ENCODE measurements at regions of chr1 and their contacts with region 1.

Region 1: DNA sequence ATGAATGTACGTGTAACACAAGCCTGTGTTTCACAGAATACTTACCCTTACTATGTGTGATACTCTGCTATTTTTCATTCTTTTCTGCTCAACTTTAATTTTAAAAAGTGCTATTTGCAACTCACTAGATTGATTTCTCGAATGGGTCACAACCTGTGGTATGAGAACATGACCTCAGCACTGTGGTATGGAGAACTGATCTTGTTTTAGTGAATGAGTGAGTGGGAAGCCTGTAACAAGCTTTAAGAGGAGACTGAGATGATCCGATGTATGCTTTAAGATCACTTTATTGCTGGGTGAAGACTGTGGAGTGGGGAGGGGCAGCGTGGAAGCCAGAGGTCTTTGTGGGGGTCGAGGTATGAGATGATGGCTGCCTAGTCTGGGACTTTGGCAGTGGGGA is 21.6 kb downstream of the MECR start:
- DNase-seq: no peak
- H3K4me3 ChIP-seq: no peak overlapping the region
- H3K27ac ChIP-seq: no peak overlapping the region
- H3K4me1 ChIP-seq: peaks cover 15% of the 10 kb centered on the region
- H3K27me3 ChIP-seq: no peaks in the 10 kb centered on the region
- CTCF ChIP-seq: no peak

Region 2: DNA sequence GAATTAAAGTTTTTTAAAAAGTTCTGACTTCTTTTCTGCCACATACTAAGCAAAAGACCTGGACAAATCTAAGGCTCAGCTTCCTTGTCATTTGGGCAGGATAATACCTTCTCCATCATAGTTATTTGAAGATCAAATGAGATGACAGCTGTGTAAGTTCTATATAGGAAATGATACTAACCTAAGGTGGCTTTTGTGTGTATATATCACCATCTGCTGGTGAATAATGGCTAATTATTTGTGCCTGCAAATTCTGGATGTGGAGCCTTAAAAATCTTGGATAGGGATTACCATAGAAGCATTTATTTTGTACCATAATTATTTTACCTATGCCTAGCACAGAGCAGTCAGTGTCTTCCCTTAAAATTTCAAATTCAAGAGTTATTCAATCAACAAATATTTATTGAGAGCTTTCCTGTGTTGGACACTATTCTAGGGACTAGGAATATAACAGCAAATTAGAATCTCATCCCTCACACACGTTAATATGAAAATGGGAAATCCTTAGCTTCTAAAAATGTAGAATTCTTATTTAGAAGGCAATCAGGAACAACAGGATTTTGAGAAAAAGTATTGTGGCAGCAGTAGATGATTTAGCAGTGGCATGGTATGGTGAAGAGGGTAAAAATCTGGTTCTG is 175.2 kb before region 1 on chr1:
- intact Hi-C with region 1: loop called (anchors 5 kb)
- DNase-seq: no peak
- H3K4me3 ChIP-seq: no peak overlapping the region
- H3K27ac ChIP-seq: no peak overlapping the region
- H3K4me1 ChIP-seq: peaks cover 17% of the 10 kb centered on the region
- H3K27me3 ChIP-seq: no peaks in the 10 kb centered on the region
- CTCF ChIP-seq: peak; percentile 69

Region 3: GRCh38 chr1:29271724-29272123 is 62.6 kb after region 1 on chr1:
- intact Hi-C with region 1: no loop called
- DNase-seq: peak; percentile 65
- H3K4me3 ChIP-seq: no peak overlapping the region
- H3K27ac ChIP-seq: peak overlapping the region; percentile 31
- H3K4me1 ChIP-seq: peaks cover 20% of the 10 kb centered on the region
- H3K27me3 ChIP-seq: no peaks in the 10 kb centered on the region
- CTCF ChIP-seq: no peak

Region 4: DNA sequence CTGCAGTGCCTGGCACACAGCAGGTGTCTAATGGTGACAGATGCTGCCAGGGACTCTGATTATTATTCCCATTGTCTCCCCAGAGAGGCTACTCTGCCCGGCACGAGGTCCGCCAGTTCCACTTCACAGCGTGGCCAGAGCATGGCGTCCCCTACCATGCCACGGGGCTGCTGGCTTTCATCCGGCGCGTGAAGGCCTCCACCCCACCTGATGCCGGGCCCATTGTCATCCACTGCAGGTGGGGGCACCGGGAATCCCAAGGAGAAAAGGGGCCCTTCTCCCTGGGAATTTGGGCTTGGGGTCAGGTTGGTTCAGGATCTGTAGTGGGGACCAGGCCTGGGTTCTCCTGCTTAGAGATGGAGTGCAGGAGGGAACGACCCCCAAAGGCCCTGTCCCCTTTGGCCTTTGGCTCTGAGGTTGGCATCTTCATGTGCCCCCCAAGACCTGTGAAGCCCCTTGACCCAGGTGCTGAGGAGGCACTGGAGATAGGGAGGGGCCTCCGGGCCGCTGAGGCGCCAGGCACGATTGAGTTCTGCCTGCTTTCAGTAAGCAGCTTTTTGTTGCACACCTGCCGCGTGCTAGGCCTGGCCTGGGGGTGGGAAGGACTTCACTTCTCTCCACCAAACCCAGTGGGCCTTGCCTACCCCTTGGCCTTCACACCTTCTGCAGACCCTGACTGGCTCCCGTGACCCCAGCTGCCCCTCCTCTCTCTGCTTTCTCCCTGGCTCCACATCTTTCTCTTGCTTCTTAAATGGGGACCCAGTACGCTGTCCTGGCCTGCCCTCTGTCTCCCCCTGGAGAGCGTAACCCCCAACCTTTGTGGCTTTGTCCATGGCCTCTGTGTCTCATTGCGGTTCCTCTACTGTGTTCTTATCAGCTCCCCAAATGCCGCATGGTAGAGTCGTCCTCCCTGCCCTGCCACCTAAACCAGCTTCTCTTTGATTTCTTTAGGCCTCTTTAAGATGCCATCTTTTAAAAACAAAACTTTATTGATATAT is 103.6 kb after region 1 on chr1:
- intact Hi-C with region 1: no loop called
- DNase-seq: no peak
- H3K4me3 ChIP-seq: no peak overlapping the region
- H3K27ac ChIP-seq: no peak overlapping the region
- H3K4me1 ChIP-seq: no peaks in the 10 kb centered on the region
- H3K27me3 ChIP-seq: no peaks in the 10 kb centered on the region
- CTCF ChIP-seq: no peak

Measured in left ventricle myocardium inferior (tissue), 1 donor.